ENCODE measurements at regions of chrX and their contacts with region 1.

Region 1: DNA sequence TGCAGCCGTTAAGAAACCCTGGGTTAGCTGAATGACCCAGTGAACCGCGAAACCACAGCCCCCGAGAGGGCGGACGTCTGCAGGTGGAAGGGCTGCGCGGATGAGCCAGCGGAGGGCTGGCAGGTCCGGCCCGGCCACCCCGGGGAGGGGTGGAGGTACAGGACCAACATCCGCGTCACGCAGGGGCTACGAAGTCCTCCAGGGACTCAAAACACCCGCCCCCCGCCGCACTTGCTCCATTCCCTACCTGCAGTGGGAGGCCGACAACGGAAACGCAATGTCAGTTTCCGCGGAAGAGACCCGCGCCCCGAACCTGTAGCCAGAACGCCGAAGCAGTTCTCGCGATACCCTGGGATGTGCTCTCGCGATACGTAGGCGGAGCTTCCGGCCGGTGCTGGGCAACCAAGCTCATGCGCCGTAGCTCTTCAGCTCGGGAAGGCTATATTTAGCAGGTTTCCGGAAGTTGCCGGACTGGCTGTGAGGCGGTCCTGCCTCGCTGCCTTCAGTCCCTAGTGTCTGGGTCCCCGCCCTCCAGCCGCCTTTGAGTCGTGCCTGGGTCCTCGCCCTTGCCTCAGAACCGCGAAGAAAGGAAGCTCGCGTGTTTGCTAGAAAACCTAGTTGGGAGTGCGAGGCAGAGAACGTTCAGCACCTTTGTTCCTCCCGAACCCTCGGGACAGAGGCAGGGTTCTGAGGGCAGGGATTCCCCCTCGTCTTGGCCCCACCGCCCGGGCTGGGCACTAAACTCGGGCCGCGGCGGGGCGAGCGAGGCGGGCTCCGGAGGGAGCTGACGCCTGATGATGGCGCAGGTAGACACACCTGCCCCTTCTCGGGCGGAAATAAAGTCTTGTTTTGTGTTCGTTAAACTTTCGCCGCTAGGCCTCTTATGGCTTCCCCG is at the starts of genes OFD1 and TRAPPC2:
- DNase-seq: peak; percentile 82 to 88
- H3K4me3 ChIP-seq: peak within 1 kb of the TSS; percentile 80 to 92 (median 86)
- H3K27ac ChIP-seq: peak within 1 kb of the TSS; percentile 94
- H3K4me1 ChIP-seq: no peaks in the 10 kb centered on the region
- H3K27me3 ChIP-seq: no peaks in the 10 kb centered on the region
- CTCF ChIP-seq: no peak
- EP300 ChIP-seq: no peak
- POLR2A ChIP-seq: peak in 1 of 2 experiments; percentile 96; a peak in 2 of 3 replicates
- RAD21 ChIP-seq: no peak
- total RNA-seq, gene OFD1: 21.4 and 23.4 TPM in 2 replicates
- total RNA-seq, gene TRAPPC2: 10.8 and 11.6 TPM in 2 replicates

Region 2: GRCh38 chrX:13721819-13722519 is 12.6 kb before region 1 on chrX:
- CTCF ChIA-PET with region 1: interaction called, 4 read pairs
- POLR2A ChIA-PET with region 1: interaction called, 19 read pairs
- DNase-seq: no peak
- H3K4me3 ChIP-seq: no peak overlapping the region
- H3K27ac ChIP-seq: no peak overlapping the region
- H3K4me1 ChIP-seq: no peaks in the 10 kb centered on the region
- H3K27me3 ChIP-seq: no peaks in the 10 kb centered on the region
- CTCF ChIP-seq: no peak
- EP300 ChIP-seq: no peak
- POLR2A ChIP-seq: no peak
- RAD21 ChIP-seq: no peak

Region 3: GRCh38 chrX:13750204-13750603 is 15.7 kb after region 1 on chrX:
- CTCF ChIA-PET with region 1: interaction called, 17 read pairs
- POLR2A ChIA-PET with region 1: interaction called, 20 read pairs
- DNase-seq: no peak
- H3K4me3 ChIP-seq: no peak overlapping the region
- H3K27ac ChIP-seq: no peak overlapping the region
- H3K4me1 ChIP-seq: no peaks in the 10 kb centered on the region; a peak in 1 of 7 replicates
- H3K27me3 ChIP-seq: no peaks in the 10 kb centered on the region
- CTCF ChIP-seq: peak in 2 of 3 experiments; percentile 42 to 58; a peak in 2 of 4 replicates
- EP300 ChIP-seq: no peak
- POLR2A ChIP-seq: no peak
- RAD21 ChIP-seq: peak; percentile 50 to 59

Region 4: DNA sequence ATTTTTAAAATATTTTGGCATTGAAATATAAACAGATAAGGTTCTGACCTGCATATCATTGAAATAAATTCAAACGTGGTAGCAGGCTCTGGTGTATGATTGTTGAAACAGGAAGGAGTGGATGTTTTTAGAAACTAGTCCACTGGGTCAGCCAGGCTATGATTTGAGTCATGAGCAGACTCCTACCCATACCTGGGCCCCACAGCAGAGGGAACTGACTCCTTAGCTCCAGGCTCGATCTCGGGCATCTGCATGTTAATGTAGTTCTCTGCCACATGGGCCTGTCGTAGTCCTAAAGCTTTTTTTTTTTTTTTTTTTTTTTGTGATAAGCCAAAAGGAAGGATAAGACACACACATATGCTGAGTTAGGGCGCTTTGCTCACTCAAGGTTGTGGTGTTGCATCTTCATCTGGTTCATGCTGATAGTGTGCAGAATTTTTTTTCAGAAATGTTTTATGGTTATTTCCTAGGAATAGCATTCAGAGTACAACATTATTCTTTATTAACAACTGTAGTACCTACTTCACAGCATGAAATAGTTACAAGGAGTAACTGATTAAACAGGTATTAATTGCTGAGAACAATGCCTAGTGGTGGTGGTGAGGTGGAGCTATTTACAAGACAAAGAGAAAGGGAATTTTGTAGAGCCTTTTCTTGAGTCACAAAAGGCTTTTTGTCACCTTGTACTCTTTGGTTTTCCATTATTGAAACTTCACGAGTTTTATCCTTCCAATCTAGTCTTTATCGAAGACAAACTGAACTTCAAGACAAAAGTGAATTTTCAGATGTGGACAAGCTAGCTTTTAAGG is 27.3 kb after region 1 on chrX:
- CTCF ChIA-PET with region 1: interaction called, 3 read pairs
- POLR2A ChIA-PET with region 1: interaction called, 10 read pairs
- DNase-seq: no peak
- H3K4me3 ChIP-seq: peak overlapping the region in 1 of 4 experiments; percentile 33; a peak in 1 of 8 replicates
- H3K27ac ChIP-seq: no peak overlapping the region
- H3K4me1 ChIP-seq: peaks cover 0 to 16% (median 6%) of the 10 kb centered on the region in 4 experiments; a peak in 4 of 7 replicates
- H3K27me3 ChIP-seq: no peaks in the 10 kb centered on the region
- CTCF ChIP-seq: no peak
- EP300 ChIP-seq: no peak
- POLR2A ChIP-seq: no peak
- RAD21 ChIP-seq: peak in 1 of 2 experiments; percentile 15; a peak in 1 of 4 replicates

Region 5: DNA sequence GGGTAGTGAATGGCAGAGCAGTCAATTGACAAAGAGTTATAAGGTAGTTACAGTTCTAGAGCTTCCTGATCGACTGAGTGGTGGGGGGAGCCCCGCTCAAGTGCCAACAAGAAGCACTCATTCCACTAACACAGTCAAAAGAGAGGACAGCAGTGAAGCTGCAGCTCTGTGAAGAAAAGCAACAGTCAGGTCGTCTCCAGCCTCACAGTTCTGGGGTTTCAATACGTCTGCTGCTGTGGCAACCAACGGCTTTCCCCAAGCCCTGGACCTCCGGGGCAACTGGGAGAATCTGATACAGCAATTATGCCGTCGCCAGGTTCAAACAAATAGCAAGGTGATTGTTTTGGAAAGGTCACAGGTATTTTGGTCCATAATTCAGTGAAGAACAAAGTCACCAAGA is 51.5 kb after region 1 on chrX:
- CTCF ChIA-PET with region 1: no interaction called
- POLR2A ChIA-PET with region 1: no interaction called
- DNase-seq: no peak
- H3K4me3 ChIP-seq: no peak overlapping the region
- H3K27ac ChIP-seq: no peak overlapping the region
- H3K4me1 ChIP-seq: no peaks in the 10 kb centered on the region; a peak in 1 of 7 replicates
- H3K27me3 ChIP-seq: no peaks in the 10 kb centered on the region
- CTCF ChIP-seq: no peak
- EP300 ChIP-seq: no peak
- POLR2A ChIP-seq: no peak
- RAD21 ChIP-seq: no peak

Region 6: GRCh38 chrX:14029425-14030173 is 295.1 kb after region 1 on chrX and contains the start of gene GEMIN8:
- CTCF ChIA-PET with region 1: interaction called, 3 read pairs
- POLR2A ChIA-PET with region 1: interaction called, 13 read pairs
- DNase-seq: peak; percentile 51 to 85
- H3K4me3 ChIP-seq: peak within 1 kb of the TSS; percentile 57 to 70 (median 66)
- H3K27ac ChIP-seq: peak within 1 kb of the TSS; percentile 83
- H3K4me1 ChIP-seq: peaks cover 0 to 8% (median 6%) of the 10 kb centered on the region in 4 experiments; a peak in 4 of 7 replicates
- H3K27me3 ChIP-seq: no peaks in the 10 kb centered on the region
- CTCF ChIP-seq: no peak
- EP300 ChIP-seq: no peak; a peak in 1 of 3 replicates
- POLR2A ChIP-seq: peak in 1 of 2 experiments; percentile 65; a peak in 2 of 3 replicates
- RAD21 ChIP-seq: no peak
- total RNA-seq, gene GEMIN8: 18.2 and 19.9 TPM in 2 replicates